ENCODE measurements at regions of chr6 and their contacts with region 1.

Region 1: GRCh38 chr6:97186416-97186999 is 96.5 kb downstream of the MMS22L start:
- DNase-seq: peak; percentile 28 to 62
- ATAC-seq: peak in 5 of 8 donors; percentile 54 to 72 (median 66)
- H3K4me3 ChIP-seq: no peak overlapping the region
- H3K27ac ChIP-seq: no peak overlapping the region
- H3K4me1 ChIP-seq: peaks cover 0 to 9% (median 0%) of the 10 kb centered on the region in 9 donors
- H3K27me3 ChIP-seq: no peaks in the 10 kb centered on the region
- CTCF ChIP-seq: peak; percentile 63 to 92 (median 87)

Region 2: GRCh38 chr6:97068211-97068610 is 118.3 kb before region 1 on chr6:
- intact Hi-C with region 1: no loop called
- DNase-seq: no peak
- ATAC-seq: no peak
- H3K4me3 ChIP-seq: no peak overlapping the region
- H3K27ac ChIP-seq: no peak overlapping the region
- H3K4me1 ChIP-seq: no peaks in the 10 kb centered on the region
- H3K27me3 ChIP-seq: peaks cover 0 to 4% (median 0%) of the 10 kb centered on the region in 7 donors
- CTCF ChIP-seq: peak in 7 of 9 donors; percentile 36 to 66 (median 52)

Region 3: GRCh38 chr6:97322811-97323210 is 136.3 kb after region 1 on chr6:
- intact Hi-C with region 1: no loop called
- DNase-seq: no peak
- ATAC-seq: no peak
- H3K4me3 ChIP-seq: no peak overlapping the region
- H3K27ac ChIP-seq: no peak overlapping the region
- H3K4me1 ChIP-seq: no peaks in the 10 kb centered on the region
- H3K27me3 ChIP-seq: no peaks in the 10 kb centered on the region
- CTCF ChIP-seq: no peak

Region 4: GRCh38 chr6:97394160-97394748 is 207.7 kb after region 1 on chr6:
- intact Hi-C with region 1: loop called (anchors 1 to 10 kb)
- DNase-seq: peak in 1 of 2 donors; percentile 32
- ATAC-seq: peak in 1 of 8 donors; percentile 58
- H3K4me3 ChIP-seq: no peak overlapping the region
- H3K27ac ChIP-seq: no peak overlapping the region
- H3K4me1 ChIP-seq: no peaks in the 10 kb centered on the region
- H3K27me3 ChIP-seq: no peaks in the 10 kb centered on the region
- CTCF ChIP-seq: peak; percentile 71 to 96 (median 90)

Region 5: GRCh38 chr6:98845211-98846020 is 1658.9 kb after region 1 on chr6:
- intact Hi-C with region 1: loop called in 1 of 10 experiments (anchors 10 kb)
- DNase-seq: peak; percentile 63 to 66
- ATAC-seq: peak; percentile 20 to 87 (median 72)
- H3K4me3 ChIP-seq: peak overlapping the region in 7 of 10 donors; percentile 6 to 43 (median 30)
- H3K27ac ChIP-seq: no peak overlapping the region
- H3K4me1 ChIP-seq: peaks cover 4 to 42% (median 34%) of the 10 kb centered on the region in 9 donors
- H3K27me3 ChIP-seq: peaks cover 27 to 99% (median 90%) of the 10 kb centered on the region in 7 donors
- CTCF ChIP-seq: peak; percentile 61 to 85 (median 80)

Region 6: GRCh38 chr6:99119109-99120031 is 1932.9 kb after region 1 on chr6:
- intact Hi-C with region 1: loop called in 1 of 10 experiments (anchors 10 kb)
- DNase-seq: no peak
- ATAC-seq: peak in 1 of 8 donors; percentile 62
- H3K4me3 ChIP-seq: no peak overlapping the region
- H3K27ac ChIP-seq: no peak overlapping the region
- H3K4me1 ChIP-seq: no peaks in the 10 kb centered on the region
- H3K27me3 ChIP-seq: peaks cover 0 to 45% (median 19%) of the 10 kb centered on the region in 7 donors
- CTCF ChIP-seq: peak; percentile 47 to 69 (median 64)

Region 7: GRCh38 chr6:99178168-99178567 is 1991.7 kb after region 1 on chr6:
- intact Hi-C with region 1: no loop called
- DNase-seq: no peak
- ATAC-seq: no peak
- H3K4me3 ChIP-seq: no peak overlapping the region
- H3K27ac ChIP-seq: no peak overlapping the region
- H3K4me1 ChIP-seq: no peaks in the 10 kb centered on the region
- H3K27me3 ChIP-seq: no peaks in the 10 kb centered on the region
- CTCF ChIP-seq: no peak